GM13976 (cell line): ENCODE measurements at regions of chr11 and their contacts with region 1.

Region 1: GRCh38 chr11:19903620-19904069 is 191.0 kb downstream of the NAV2 start:
- DNase-seq: peak; percentile 33
- CTCF ChIP-seq: peak; percentile 69

Region 2: GRCh38 chr11:19561011-19561410 is 342.6 kb before region 1 on chr11:
- in situ Hi-C with region 1: loop called (anchors 10 kb)
- DNase-seq: no peak
- CTCF ChIP-seq: no peak